ENCODE measurements at regions of chr6 and their contacts with region 1.

Region 1: GRCh38 chr6:32413427-32414047 is 6.6 kb upstream of the BTNL2 start:
- DNase-seq: peak; percentile 62 to 85 (median 82)
- H3K4me3 ChIP-seq: no peak overlapping the region
- H3K27ac ChIP-seq: no peak overlapping the region
- H3K4me1 ChIP-seq: no peaks in the 10 kb centered on the region
- H3K27me3 ChIP-seq: peaks cover 28% of the 10 kb centered on the region
- CTCF ChIP-seq: peak; percentile 87 to 98 (median 90)
- POLR2A ChIP-seq: no peak

Region 2: GRCh38 chr6:31568537-31568961 is 845.0 kb before region 1 on chr6:
- intact Hi-C with region 1: no loop called
- DNase-seq: peak in 1 of 7 donors; percentile 38
- H3K4me3 ChIP-seq: no peak overlapping the region
- H3K27ac ChIP-seq: no peak overlapping the region
- H3K4me1 ChIP-seq: no peaks in the 10 kb centered on the region
- H3K27me3 ChIP-seq: no peaks in the 10 kb centered on the region
- CTCF ChIP-seq: no peak
- POLR2A ChIP-seq: no peak

Region 3: GRCh38 chr6:32244946-32245398 is 168.6 kb before region 1 on chr6:
- intact Hi-C with region 1: loop called (anchors 10 kb)
- DNase-seq: peak; percentile 64 to 88 (median 79)
- H3K4me3 ChIP-seq: no peak overlapping the region
- H3K27ac ChIP-seq: peak overlapping the region in 2 of 5 donors; percentile 29 to 64
- H3K4me1 ChIP-seq: no peaks in the 10 kb centered on the region
- H3K27me3 ChIP-seq: no peaks in the 10 kb centered on the region
- CTCF ChIP-seq: peak; percentile 83 to 97 (median 91)
- POLR2A ChIP-seq: no peak

Region 4: GRCh38 chr6:32700391-32701040 is 287.0 kb after region 1 on chr6:
- intact Hi-C with region 1: loop called (anchors 5 kb)
- DNase-seq: peak; percentile 32 to 58 (median 49)
- H3K4me3 ChIP-seq: no peak overlapping the region
- H3K27ac ChIP-seq: no peak overlapping the region
- H3K4me1 ChIP-seq: no peaks in the 10 kb centered on the region
- H3K27me3 ChIP-seq: no peaks in the 10 kb centered on the region
- CTCF ChIP-seq: peak in 5 of 6 experiments; percentile 70 to 77 (median 73)
- POLR2A ChIP-seq: no peak

Region 5: DNA sequence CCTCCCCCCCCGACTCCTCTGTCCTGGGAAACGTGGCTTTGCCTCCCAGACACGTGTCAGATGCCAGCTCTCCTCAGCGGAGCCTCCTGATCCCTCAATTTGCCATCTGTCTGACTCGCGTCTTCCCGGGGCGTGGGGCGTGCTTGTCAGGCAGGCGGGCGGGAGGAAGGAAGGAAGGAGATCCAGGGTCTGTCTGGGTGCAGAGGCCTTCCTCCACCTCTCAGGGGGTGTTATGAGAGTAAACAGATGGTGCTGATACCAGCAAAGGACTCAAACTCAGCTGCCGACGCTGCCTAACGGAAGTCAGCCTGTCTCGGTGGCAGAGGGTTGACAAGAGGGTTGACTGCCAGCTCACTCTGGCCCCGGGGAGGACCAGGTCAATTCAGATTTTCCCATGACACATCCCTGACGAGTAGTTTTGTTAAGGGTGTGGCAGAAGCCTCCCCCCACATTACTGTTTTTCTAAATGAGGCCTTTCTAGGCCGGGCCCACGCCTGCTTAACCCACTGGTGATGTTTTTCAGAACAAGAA is 1280.9 kb after region 1 on chr6:
- intact Hi-C with region 1: no loop called
- DNase-seq: peak in 1 of 7 donors; percentile 75
- H3K4me3 ChIP-seq: no peak overlapping the region
- H3K27ac ChIP-seq: peak overlapping the region in 3 of 5 donors; percentile 25 to 77 (median 62)
- H3K4me1 ChIP-seq: peaks cover 11 to 33% of the 10 kb centered on the region in 2 donors
- H3K27me3 ChIP-seq: no peaks in the 10 kb centered on the region
- CTCF ChIP-seq: no peak
- POLR2A ChIP-seq: no peak